Activated naive CD4-positive, alpha-beta T cell treated with anti-CD3 and anti-CD28 coated beads for 36 hours (primary cell): ENCODE measurements at regions of chr12 and their contacts with region 1.

Region 1: DNA sequence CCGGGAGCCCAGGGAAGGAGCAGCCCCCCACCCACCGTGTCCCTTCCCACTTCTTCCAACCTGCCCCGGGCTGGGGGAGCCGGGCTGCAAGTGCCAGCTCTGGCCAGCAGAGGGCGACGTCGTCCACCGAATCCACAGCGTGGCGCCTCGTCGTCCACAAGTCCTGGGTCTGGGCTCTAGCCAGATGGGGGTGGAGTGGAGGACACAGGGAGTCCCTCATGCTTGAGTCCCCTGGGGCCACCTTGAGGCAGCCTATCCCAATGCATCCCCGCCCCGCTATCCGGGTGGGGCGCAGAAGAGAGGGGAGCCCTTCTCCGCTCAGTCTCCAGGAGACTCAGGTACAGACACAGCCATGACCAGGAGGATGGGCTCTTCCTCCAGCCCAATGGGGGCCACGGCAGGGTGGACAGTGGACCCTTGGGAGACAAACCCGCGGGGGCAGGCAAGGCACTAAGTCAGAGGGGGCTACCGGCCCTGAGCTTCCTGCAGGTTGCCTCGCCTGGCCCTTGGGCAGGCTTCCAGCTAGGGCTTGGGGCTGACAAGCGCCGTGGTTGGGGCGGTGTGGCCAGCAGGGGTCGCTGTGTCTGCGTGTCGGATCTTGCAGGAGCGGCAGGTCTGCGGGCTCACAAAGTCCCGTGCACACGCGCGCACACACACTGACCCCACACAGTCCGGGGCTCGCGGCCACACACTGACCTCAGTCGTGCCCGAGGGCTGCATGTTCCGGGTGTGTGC is 5.5 kb downstream of the AQP5 start:
- DNase-seq: peak; percentile 96
- H3K4me3 Mint-ChIP-seq: peak overlapping the region; percentile 54
- H3K27ac Mint-ChIP-seq: no peak overlapping the region
- H3K4me1 Mint-ChIP-seq: no peaks in the 10 kb centered on the region
- H3K27me3 Mint-ChIP-seq: peaks cover 33% of the 10 kb centered on the region

Region 2: DNA sequence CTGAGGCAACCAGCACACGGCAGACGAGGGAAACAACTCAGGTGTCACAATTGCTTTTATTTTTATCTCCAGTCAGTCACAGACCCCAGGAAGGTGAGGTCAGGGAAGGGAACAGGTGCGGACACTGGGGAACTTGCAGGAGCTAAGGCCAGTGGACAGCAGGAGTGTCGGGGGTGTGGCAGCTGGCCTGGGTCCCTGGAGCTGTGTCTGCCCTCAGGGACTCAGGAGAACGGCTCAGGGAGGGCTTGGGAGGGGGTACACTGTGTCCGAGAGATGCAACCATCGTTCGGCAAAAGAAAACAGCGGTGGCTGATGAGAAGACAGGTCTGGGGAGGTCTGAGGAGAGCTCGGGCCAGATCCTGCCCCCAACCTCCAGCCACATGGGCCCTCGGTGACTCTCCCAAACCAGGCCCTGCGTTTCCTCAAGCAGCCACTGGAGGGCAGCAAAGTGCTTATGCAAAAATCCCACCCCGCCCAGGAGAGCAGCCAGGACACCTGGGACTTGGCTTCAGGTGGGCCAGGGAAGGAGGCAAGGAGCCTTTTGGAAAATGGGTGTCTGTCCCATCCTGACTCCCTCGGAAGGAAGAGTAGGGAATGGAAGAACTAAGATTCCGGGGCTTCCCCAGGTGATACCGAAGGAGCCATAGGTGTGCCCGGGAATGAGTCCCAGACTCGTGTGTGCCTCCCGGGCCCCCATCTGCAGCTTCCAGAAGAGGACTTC is 100.2 kb before region 1 on chr12:
- CTCF ChIA-PET with region 1: interaction called, 44 read pairs
- intact Hi-C with region 1: loop called (anchors 2 kb)
- DNase-seq: peak; percentile 86
- H3K4me3 Mint-ChIP-seq: no peak overlapping the region
- H3K27ac Mint-ChIP-seq: no peak overlapping the region
- H3K4me1 Mint-ChIP-seq: no peaks in the 10 kb centered on the region
- H3K27me3 Mint-ChIP-seq: no peaks in the 10 kb centered on the region

Region 3: GRCh38 chr12:49983892-49984291 is 16.7 kb after region 1 on chr12:
- CTCF ChIA-PET with region 1: interaction called, 76 read pairs
- intact Hi-C with region 1: no loop called
- DNase-seq: no peak
- H3K4me3 Mint-ChIP-seq: no peak overlapping the region
- H3K27ac Mint-ChIP-seq: no peak overlapping the region
- H3K4me1 Mint-ChIP-seq: peaks cover 1% of the 10 kb centered on the region
- H3K27me3 Mint-ChIP-seq: no peaks in the 10 kb centered on the region

Region 4: GRCh38 chr12:50032639-50033581 is 65.7 kb after region 1 on chr12:
- CTCF ChIA-PET with region 1: interaction called, 19 read pairs
- intact Hi-C with region 1: no loop called
- DNase-seq: no peak
- H3K4me3 Mint-ChIP-seq: no peak overlapping the region
- H3K27ac Mint-ChIP-seq: no peak overlapping the region
- H3K4me1 Mint-ChIP-seq: no peaks in the 10 kb centered on the region
- H3K27me3 Mint-ChIP-seq: peaks cover 18% of the 10 kb centered on the region

Region 5: DNA sequence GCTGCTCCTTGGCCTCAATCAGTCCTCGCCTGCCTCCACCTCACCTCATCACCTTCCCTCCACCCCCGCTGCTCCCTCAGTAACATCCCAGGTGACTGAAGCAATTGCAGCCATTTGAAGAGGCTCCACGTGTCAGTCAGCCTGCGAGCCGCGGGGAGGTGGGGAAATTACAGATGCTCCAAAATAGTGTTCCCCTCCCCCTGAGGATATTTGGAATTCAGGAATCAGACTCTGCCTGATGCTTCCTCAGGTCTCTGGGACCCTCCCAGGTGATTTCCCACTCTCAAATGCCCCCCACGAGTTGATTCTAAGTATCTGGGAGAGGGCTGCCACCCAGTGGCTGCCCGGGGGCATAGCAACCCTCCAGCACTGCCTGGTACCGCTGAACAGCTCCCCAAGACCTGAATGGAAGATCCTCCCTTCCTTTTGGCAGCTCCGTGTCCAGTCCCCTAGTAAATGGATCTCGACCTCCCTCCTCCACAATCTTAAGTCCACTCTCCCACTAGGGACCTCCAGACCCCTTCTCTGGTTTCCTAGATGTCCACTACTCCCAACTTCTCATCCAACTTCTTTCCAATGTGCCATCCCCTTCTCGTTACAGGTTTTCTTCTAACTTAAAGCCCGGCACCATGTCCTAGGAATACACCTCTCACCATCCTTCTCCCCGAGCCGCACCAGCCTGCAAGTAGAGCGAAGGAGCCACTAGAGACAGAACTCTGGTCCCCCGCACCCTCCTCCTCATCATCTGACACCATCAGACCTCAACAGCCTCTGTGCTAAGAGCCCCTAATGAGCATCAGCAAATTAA is 88.8 kb after region 1 on chr12:
- CTCF ChIA-PET with region 1: interaction called, 65 read pairs
- intact Hi-C with region 1: loop called (anchors 1 kb)
- DNase-seq: peak; percentile 70
- H3K4me3 Mint-ChIP-seq: peak overlapping the region; percentile 39
- H3K27ac Mint-ChIP-seq: no peak overlapping the region
- H3K4me1 Mint-ChIP-seq: peaks cover 33% of the 10 kb centered on the region
- H3K27me3 Mint-ChIP-seq: peaks cover 41% of the 10 kb centered on the region

Region 6: DNA sequence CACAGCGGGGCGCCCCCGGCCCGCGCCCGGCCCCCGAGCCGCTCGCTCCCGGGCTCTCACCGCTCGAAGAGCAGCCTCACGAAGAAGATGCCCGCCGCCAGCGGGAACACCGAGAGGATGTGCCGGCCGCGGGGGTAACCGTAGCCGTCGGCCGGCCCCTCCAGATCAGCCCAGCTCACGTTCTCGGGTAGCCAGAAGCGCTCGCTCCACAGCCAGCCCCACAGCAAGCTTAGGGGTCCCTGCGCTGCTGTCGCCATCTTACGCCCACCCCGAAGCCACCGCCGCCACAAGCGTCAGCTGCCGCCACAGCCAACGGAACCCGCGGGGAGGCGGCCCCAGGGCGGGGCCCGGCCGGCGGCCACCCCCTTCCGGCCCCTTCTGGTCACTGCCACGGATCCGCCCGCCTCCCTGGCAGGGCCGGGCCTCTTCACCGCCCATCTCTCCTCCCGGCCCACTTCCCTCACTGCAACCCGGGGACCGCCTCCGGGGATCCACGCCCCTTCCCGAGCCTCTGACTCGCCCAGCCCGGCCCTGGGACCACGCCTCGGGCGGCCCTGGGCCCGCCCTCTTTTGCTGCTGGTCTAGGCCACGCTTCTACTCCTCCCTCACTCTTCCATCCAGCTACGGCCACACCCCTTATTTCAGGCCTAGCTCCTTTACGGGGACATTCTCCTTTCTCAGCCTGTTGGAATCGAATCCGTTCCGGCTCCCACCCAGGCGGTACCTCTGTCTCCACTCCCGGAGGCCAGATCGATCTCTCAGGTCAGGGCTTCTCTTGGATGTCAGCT is 200.0 kb after region 1 on chr12 and contains the start of gene CERS5:
- CTCF ChIA-PET with region 1: interaction called, 3 read pairs
- intact Hi-C with region 1: loop called (anchors 2 kb)
- DNase-seq: peak; percentile 98
- H3K4me3 Mint-ChIP-seq: peak within 1 kb of the TSS; percentile 92
- H3K27ac Mint-ChIP-seq: peak within 1 kb of the TSS; percentile 91
- H3K4me1 Mint-ChIP-seq: peaks cover 33% of the 10 kb centered on the region
- H3K27me3 Mint-ChIP-seq: no peaks in the 10 kb centered on the region
- total RNA-seq, gene CERS5: 32.6 to 33.6 TPM

Region 7: GRCh38 chr12:50351120-50352043 is 384.2 kb after region 1 on chr12:
- CTCF ChIA-PET with region 1: no interaction called
- intact Hi-C with region 1: no loop called
- DNase-seq: no peak
- H3K4me3 Mint-ChIP-seq: no peak overlapping the region
- H3K27ac Mint-ChIP-seq: no peak overlapping the region
- H3K4me1 Mint-ChIP-seq: no peaks in the 10 kb centered on the region
- H3K27me3 Mint-ChIP-seq: no peaks in the 10 kb centered on the region